RWPE1 (cell line): ENCODE measurements at regions of chr2 and their contacts with region 1.

Region 1: DNA sequence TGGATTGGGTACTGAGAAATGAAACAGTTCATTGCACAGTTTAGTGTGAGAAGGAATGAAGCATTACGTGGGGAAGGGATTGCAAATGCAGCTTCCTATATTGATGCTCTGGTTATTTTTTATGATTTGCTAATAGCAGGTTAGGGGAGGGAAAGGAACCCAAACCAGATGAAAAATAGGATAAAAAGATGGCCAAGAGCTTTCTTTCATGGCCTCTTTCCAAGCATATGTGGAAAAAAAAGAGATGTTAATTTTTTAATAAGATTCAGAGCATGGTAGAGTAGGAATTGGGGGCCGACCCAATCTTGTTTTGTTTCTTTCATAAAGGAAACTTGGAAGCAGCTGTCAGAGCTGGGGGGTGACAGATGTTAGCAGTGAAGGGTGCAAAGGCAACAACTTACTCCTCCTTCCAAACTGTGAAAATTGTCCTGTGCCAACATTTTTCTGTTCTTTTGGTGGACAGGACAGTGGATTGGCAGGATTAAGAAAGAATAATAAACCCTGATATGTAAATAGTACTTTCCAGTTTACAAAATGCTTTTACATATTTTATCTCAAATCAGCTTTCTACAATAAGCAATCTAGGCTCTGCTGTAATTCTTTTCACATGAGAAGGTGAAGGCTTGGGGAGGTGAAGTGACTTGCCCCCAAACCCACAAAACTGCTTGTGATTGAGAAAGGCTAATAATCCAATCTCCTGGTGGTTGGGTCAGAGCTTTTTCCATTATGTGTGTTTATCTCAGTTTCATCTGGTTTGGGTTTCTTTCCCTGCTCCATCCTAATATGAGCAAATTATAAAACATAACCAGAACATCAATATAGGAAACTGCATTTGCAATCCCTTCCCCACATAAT is 270.1 kb downstream of the ETAA1 start:
- DNase-seq: no peak
- H3K27ac ChIP-seq: no peak overlapping the region
- CTCF ChIP-seq: no peak

Region 2: GRCh38 chr2:67201521-67201920 is 465.8 kb before region 1 on chr2:
- CTCF ChIA-PET with region 1: interaction called, 10 read pairs
- POLR2A ChIA-PET with region 1: no interaction called
- DNase-seq: no peak
- H3K27ac ChIP-seq: no peak overlapping the region
- CTCF ChIP-seq: no peak

Region 3: GRCh38 chr2:68272246-68272994 is 605.1 kb after region 1 on chr2:
- CTCF ChIA-PET with region 1: no interaction called
- POLR2A ChIA-PET with region 1: no interaction called
- DNase-seq: no peak
- H3K27ac ChIP-seq: no peak overlapping the region
- CTCF ChIP-seq: no peak